Aorta (tissue), 5 donors: ENCODE measurements at regions of chr16 and their contacts with region 1.

Region 1: GRCh38 chr16:8137606-8138005 is 452.7 kb downstream of the TMEM114 start:
- DNase-seq: no peak
- ATAC-seq: no peak
- H3K4me3 ChIP-seq: no peak overlapping the region
- H3K27ac ChIP-seq: no peak overlapping the region
- H3K4me1 ChIP-seq: no peaks in the 10 kb centered on the region
- H3K27me3 ChIP-seq: no peaks in the 10 kb centered on the region

Region 2: DNA sequence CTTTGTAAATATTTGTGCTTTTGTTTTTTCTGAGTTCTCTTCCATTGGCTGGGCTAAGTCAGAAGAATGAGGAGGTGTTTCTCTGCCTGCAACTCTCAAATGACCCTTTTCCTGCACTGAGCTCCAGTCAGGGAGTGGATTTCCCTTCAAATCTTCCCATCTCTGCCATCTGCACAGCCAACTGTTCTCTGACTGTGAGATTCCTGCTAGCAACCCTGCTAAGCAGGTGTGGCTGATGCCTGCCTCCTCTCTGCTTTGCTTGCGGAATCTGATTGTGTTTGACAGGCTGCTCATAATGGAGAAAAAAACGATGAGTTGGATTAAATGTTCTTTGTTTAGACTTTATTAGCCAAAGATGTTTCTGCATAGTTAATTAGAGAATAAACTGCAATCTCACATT is 67.1 kb before region 1 on chr16:
- intact Hi-C with region 1: loop called in 1 of 2 experiments (anchors 10 kb)
- DNase-seq: no peak
- ATAC-seq: no peak
- H3K4me3 ChIP-seq: no peak overlapping the region
- H3K27ac ChIP-seq: no peak overlapping the region
- H3K4me1 ChIP-seq: no peaks in the 10 kb centered on the region
- H3K27me3 ChIP-seq: no peaks in the 10 kb centered on the region